ENCODE measurements at regions of chr2 and their contacts with region 1.

Region 1: GRCh38 chr2:45637440-45637839 is 14.0 kb upstream of the PRKCE start:
- DNase-seq: peak; percentile 41
- ATAC-seq: peak; percentile 96
- H3K4me3 ChIP-seq: no peak overlapping the region
- H3K27ac ChIP-seq: no peak overlapping the region
- H3K4me1 ChIP-seq: no peaks in the 10 kb centered on the region; the same call in 1 of the 2 replicates
- H3K27me3 ChIP-seq: no peaks in the 10 kb centered on the region
- CTCF ChIP-seq: no peak
- EP300 ChIP-seq: peak; percentile 50 to 61; a peak in 3 of 4 replicates
- POLR2A ChIP-seq: no peak
- RAD21 ChIP-seq: no peak

Region 2: DNA sequence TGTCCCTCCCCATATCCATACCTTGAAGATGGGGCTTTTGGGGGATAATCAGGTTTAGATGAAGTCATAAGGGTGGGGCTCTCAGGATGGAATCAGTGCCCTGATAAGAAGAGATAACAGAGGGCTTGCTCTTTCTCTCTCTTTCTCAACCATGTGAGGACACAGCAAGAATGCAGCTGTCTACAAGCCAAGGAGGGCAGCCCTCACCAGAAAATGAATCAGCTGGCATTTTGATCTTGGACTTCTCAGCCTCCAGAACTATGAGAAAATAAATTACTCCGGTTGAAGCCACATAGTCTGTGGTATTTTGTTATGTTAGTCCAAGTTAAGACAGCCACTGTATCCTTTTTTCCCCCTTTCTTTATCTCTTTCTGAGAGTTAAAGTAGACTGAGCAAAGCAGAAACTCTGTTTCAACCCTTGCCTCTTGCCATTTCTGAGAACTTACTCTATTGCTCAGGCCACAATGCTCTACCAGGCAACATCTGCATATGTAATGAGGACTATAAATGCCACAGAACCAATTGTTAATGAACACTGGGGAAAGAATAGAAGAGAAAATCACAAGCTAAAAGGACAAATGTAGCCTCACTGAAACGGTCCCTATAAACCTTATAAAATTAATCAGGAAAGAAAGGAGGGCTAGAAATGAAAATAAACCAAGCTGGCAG is 83.2 kb before region 1 on chr2:
- CTCF ChIA-PET with region 1: no interaction called
- POLR2A ChIA-PET with region 1: no interaction called
- RAD21 ChIA-PET with region 1: no interaction called
- SMC1A ChIA-PET with region 1: no interaction called
- in situ Hi-C with region 1: no loop called
- intact Hi-C with region 1: no loop called
- DNase-seq: no peak
- ATAC-seq: no peak
- H3K4me3 ChIP-seq: no peak overlapping the region
- H3K27ac ChIP-seq: no peak overlapping the region
- H3K4me1 ChIP-seq: no peaks in the 10 kb centered on the region
- H3K27me3 ChIP-seq: no peaks in the 10 kb centered on the region
- CTCF ChIP-seq: no peak
- EP300 ChIP-seq: no peak
- POLR2A ChIP-seq: no peak
- RAD21 ChIP-seq: no peak

Region 3: GRCh38 chr2:45759310-45759851 is 121.9 kb after region 1 on chr2:
- CTCF ChIA-PET with region 1: no interaction called
- POLR2A ChIA-PET with region 1: no interaction called
- RAD21 ChIA-PET with region 1: no interaction called
- SMC1A ChIA-PET with region 1: no interaction called
- in situ Hi-C with region 1: no loop called
- intact Hi-C with region 1: no loop called
- DNase-seq: no peak
- ATAC-seq: no peak
- H3K4me3 ChIP-seq: no peak overlapping the region
- H3K27ac ChIP-seq: no peak overlapping the region
- H3K4me1 ChIP-seq: peaks cover under 1% of the 10 kb centered on the region; the same call in 1 of the 2 replicates
- H3K27me3 ChIP-seq: no peaks in the 10 kb centered on the region
- CTCF ChIP-seq: no peak
- EP300 ChIP-seq: no peak
- POLR2A ChIP-seq: no peak
- RAD21 ChIP-seq: no peak

Region 4: DNA sequence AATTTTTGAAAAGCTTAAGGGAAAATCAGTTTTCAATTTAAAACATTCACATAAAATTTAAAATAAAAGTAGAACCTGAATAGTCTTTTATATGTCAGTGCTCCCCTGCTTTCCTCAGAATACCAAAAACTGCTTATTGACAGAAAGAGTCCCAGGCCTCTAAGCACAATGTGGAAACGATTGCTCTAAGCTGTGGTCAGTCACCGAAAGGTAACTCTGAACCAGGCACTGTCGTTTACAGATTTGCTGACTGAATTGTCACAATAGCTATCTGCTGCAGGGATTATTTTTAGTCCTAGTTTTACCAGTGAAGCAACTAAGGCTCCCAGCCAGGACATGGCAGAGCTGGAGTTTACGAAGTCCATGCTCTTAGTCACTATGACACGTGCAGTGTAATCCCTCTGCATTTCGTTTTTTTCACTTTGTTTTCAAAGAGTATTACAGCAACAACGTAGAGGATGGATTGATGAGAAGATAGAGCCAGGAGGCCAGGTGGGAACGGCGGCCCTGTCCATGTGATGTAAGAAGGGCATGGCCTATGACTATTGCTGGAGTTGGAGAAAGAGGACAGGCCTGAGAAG is 813.8 kb after region 1 on chr2:
- CTCF ChIA-PET with region 1: no interaction called
- POLR2A ChIA-PET with region 1: no interaction called
- RAD21 ChIA-PET with region 1: no interaction called
- SMC1A ChIA-PET with region 1: no interaction called
- in situ Hi-C with region 1: no loop called
- intact Hi-C with region 1: loop called (anchors 10 kb)
- DNase-seq: no peak
- ATAC-seq: no peak
- H3K4me3 ChIP-seq: no peak overlapping the region
- H3K27ac ChIP-seq: no peak overlapping the region
- H3K4me1 ChIP-seq: no peaks in the 10 kb centered on the region
- H3K27me3 ChIP-seq: no peaks in the 10 kb centered on the region
- CTCF ChIP-seq: no peak
- EP300 ChIP-seq: no peak
- POLR2A ChIP-seq: no peak
- RAD21 ChIP-seq: no peak

Region 5: DNA sequence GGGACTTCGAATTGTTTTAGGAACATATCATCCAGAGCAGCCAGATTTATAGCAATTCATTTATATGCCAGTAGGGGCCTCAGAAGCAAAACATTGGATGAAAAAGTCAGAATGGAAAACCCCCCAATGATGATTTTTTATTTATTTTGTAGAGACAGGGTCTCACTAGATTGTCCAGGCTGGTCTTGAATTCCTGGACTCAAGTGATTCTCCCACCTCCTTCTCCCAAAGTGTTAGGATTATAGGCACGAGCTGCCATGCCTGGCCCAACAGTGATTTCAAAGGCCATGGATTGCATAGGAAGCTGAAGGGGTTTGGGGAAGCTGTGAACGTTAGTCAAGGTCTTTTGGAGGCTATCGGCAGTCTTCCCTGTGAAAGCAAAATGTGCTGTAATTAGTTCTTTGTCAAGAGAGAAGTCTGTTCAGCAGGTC is 1300.0 kb after region 1 on chr2:
- CTCF ChIA-PET with region 1: no interaction called
- POLR2A ChIA-PET with region 1: no interaction called
- RAD21 ChIA-PET with region 1: no interaction called
- SMC1A ChIA-PET with region 1: no interaction called
- in situ Hi-C with region 1: no loop called
- intact Hi-C with region 1: no loop called
- DNase-seq: no peak
- ATAC-seq: no peak
- H3K4me3 ChIP-seq: no peak overlapping the region
- H3K27ac ChIP-seq: no peak overlapping the region
- H3K4me1 ChIP-seq: peaks cover 8% of the 10 kb centered on the region
- H3K27me3 ChIP-seq: no peaks in the 10 kb centered on the region
- CTCF ChIP-seq: peak; percentile 16 to 51 (median 39); a peak in 3 of 6 replicates
- EP300 ChIP-seq: no peak
- POLR2A ChIP-seq: no peak
- RAD21 ChIP-seq: peak; percentile 33; the same call in 1 of the 2 replicates

Measured in GM12878 (cell line).